ENCODE measurements at regions of chr16 and their contacts with region 1.

Region 1: GRCh38 chr16:68229431-68230198 is 6.3 kb downstream of the ESRP2 start:
- DNase-seq: peak; percentile 58
- CTCF ChIP-seq: peak; percentile 75

Region 2: GRCh38 chr16:67999985-68000384 is 229.6 kb before region 1 on chr16:
- CTCF ChIA-PET with region 1: no interaction called
- POLR2A ChIA-PET with region 1: no interaction called
- DNase-seq: no peak
- CTCF ChIP-seq: no peak

Region 3: DNA sequence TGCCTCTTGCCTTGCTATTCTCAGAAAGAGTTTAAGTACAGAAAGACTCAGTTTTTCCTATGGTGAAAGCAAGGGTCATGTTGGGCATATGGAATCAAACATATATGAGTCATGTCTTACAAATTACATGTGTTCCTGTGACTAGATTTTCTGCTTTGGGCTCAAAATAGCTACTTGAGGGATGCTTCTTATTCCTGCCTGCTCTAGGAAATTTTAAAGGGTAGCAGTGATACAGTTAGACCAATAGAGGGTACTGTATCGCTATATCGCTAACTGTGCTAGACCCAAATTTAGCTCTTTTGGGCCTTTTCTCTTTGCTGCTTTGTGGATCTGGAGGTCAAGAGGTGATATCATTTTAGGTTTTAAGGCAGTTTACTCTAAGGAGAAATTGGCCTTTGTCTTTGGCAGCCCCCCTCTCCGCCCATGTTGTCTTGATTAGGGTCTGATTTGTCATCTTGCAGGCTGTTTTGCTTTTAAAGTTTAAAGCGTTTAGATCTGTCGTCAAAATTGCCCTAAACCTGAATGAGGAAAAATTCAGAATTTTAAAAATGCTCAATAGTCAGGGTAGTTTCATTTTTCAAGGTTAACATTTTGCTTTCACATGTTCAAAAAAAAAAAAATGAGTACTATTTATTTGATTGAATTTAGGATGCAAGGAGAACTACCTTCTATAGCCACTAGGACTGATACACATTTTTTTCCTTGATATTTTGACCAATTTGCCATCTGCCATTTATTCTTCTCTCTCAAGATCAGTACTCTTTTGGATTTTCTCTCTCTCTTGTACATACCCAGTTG is 135.6 kb before region 1 on chr16:
- CTCF ChIA-PET with region 1: interaction called, 10 read pairs
- POLR2A ChIA-PET with region 1: no interaction called
- DNase-seq: no peak
- CTCF ChIP-seq: peak; percentile 42

Region 4: DNA sequence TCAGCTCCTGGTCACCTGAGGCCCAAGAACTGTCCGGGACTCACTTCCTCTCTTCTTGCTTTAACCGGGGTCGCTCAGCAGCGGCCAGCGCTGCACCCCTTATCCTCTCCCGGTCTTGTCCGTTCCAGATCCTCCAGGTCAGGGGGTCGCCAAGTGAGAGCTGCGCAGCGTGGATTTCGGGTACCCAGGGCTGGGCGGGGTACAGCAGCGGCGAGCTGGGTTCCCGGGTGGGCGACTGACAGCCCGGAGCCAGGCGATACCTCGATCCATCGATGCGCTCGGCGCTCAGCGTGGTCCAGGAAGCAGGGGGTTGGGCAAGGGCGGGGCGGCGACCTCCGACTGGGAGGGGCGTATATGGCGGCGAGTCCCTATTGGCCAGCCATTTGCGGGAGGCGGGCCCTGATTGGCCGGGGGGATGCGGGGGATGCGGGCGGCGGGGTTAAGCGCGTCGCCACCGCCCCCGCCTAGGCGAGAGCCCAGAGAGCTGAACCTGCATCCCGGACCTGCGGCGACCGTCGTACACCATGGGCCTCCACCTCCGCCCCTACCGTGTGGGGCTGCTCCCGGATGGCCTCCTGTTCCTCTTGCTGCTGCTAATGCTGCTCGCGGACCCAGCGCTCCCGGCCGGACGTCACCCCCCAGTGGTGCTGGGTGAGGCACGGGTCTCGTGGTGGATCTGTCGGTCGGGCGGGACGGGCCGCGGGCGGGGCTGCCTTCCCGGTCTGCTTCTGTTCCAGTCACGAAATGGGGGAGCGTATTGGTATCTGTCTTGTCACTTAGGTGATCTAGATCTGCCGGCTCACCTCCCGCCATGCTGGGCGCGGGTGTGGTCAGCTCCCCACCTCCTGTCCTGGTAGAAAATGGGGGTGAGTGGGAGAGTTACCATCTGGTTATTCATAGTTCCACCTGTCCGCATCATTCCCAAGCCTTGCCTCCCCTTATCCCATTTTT is 15.6 kb after region 1 on chr16 and contains the start of gene PLA2G15:
- CTCF ChIA-PET with region 1: interaction called, 12 read pairs
- POLR2A ChIA-PET with region 1: no interaction called
- DNase-seq: peak; percentile 98
- CTCF ChIP-seq: no peak